A549 (cell line): ENCODE measurements at regions of chr3 and their contacts with region 1.

Region 1: DNA sequence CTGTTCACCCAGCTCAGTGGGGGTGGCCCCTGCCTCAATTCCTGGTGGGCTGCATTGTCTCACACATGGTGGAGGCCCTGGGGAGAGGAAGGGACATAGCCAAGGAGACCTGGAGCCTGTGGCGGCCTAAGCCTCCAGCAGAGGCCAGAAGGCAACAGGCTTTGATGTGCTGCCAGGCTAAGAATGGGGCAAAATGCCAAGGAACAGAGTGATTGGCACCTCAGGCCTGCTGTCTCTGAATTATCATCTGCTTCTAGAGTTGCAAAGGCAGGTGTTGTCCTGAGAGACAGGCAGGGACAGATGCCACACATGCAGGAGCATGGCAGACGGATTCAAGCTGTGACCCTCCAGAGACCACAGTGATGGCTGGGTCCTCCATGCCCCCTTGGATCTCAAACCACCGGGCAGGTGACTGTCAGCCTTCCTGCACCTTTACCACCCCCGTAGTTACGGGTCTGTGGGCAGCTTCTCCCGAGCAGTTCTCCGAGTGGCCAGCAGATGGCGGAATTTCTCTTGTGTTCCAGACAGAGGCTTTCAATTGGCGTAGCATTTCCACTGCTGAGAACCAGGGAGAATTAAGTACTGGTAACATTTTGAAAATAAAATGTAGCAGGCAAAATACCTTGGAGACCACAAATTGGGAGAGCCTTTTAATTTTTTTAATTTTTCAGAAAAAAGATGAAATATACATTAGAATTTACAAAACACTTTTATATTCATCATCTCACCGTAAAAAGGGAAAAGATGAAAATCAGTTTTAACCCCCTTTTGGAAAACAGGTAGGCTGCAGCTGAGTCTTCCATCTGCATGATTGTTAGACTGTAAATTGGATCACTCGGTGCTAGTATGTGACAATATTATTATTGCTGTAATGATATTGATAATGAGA is 525.5 kb upstream of the CFAP20DC start:
- DNase-seq: peak; percentile 58 to 64
- ATAC-seq: peak; percentile 90 to 92
- H3K4me3 ChIP-seq: no peak overlapping the region
- H3K27ac ChIP-seq: peak overlapping the region in 1 of 2 experiments; percentile 62; a peak in 2 of 6 replicates
- H3K4me1 ChIP-seq: peaks cover 12% of the 10 kb centered on the region; the same call in 2 of the 3 replicates
- CTCF ChIP-seq: peak; percentile 76
- EP300 ChIP-seq: no peak
- POLR2A ChIP-seq: no peak
- RAD21 ChIP-seq: peak; percentile 88 to 91

Region 2: GRCh38 chr3:59559721-59560435 is 15.5 kb before region 1 on chr3:
- CTCF ChIA-PET with region 1: interaction called, 12 read pairs
- POLR2A ChIA-PET with region 1: no interaction called
- DNase-seq: peak; percentile 45 to 62
- ATAC-seq: peak; percentile 97 to 99
- H3K4me3 ChIP-seq: no peak overlapping the region
- H3K27ac ChIP-seq: peak overlapping the region; percentile 70 to 75
- H3K4me1 ChIP-seq: peaks cover 12% of the 10 kb centered on the region
- CTCF ChIP-seq: no peak
- EP300 ChIP-seq: no peak; a peak in 1 of 5 replicates
- POLR2A ChIP-seq: no peak
- RAD21 ChIP-seq: no peak

Region 3: GRCh38 chr3:59717679-59718205 is 142.4 kb after region 1 on chr3:
- CTCF ChIA-PET with region 1: no interaction called
- POLR2A ChIA-PET with region 1: no interaction called
- DNase-seq: no peak
- ATAC-seq: no peak
- H3K4me3 ChIP-seq: no peak overlapping the region
- H3K27ac ChIP-seq: no peak overlapping the region
- H3K4me1 ChIP-seq: no peaks in the 10 kb centered on the region
- CTCF ChIP-seq: no peak
- EP300 ChIP-seq: no peak
- POLR2A ChIP-seq: no peak
- RAD21 ChIP-seq: no peak

Region 4: GRCh38 chr3:59809710-59810444 is 234.5 kb after region 1 on chr3:
- CTCF ChIA-PET with region 1: interaction called, 77 read pairs
- POLR2A ChIA-PET with region 1: no interaction called
- DNase-seq: peak; percentile 18 to 43
- ATAC-seq: peak; percentile 80 to 86
- H3K4me3 ChIP-seq: no peak overlapping the region
- H3K27ac ChIP-seq: peak overlapping the region; percentile 0 to 72; a peak in 4 of 6 replicates
- H3K4me1 ChIP-seq: no peaks in the 10 kb centered on the region
- CTCF ChIP-seq: peak; percentile 39
- EP300 ChIP-seq: no peak
- POLR2A ChIP-seq: no peak
- RAD21 ChIP-seq: peak; percentile 64 to 71

Region 5: GRCh38 chr3:59857589-59858346 is 282.4 kb after region 1 on chr3:
- CTCF ChIA-PET with region 1: interaction called, 62 read pairs
- POLR2A ChIA-PET with region 1: no interaction called
- DNase-seq: peak; percentile 50 to 71
- ATAC-seq: peak; percentile 99 to 100
- H3K4me3 ChIP-seq: no peak overlapping the region
- H3K27ac ChIP-seq: no peak overlapping the region
- H3K4me1 ChIP-seq: no peaks in the 10 kb centered on the region; the same call in 2 of the 3 replicates
- CTCF ChIP-seq: peak; percentile 75
- EP300 ChIP-seq: no peak
- POLR2A ChIP-seq: no peak
- RAD21 ChIP-seq: peak; percentile 72 to 78